PC-9 (cell line): ENCODE measurements at regions of chr18 and their contacts with region 1.

Region 1: GRCh38 chr18:79528846-79529245 is 133.1 kb downstream of the NFATC1 start:
- DNase-seq: peak; percentile 43 to 60
- H3K4me3 ChIP-seq: no peak overlapping the region
- H3K27ac ChIP-seq: no peak overlapping the region
- H3K4me1 ChIP-seq: no peaks in the 10 kb centered on the region
- H3K27me3 ChIP-seq: peaks cover 66% of the 10 kb centered on the region
- CTCF ChIP-seq: peak; percentile 86

Region 2: GRCh38 chr18:79343567-79344207 is 185.2 kb before region 1 on chr18:
- CTCF ChIA-PET with region 1: no interaction called
- POLR2A ChIA-PET with region 1: no interaction called
- intact Hi-C with region 1: no loop called
- DNase-seq: peak in 1 of 2 experiments; percentile 41
- H3K4me3 ChIP-seq: no peak overlapping the region
- H3K27ac ChIP-seq: no peak overlapping the region
- H3K4me1 ChIP-seq: no peaks in the 10 kb centered on the region
- H3K27me3 ChIP-seq: no peaks in the 10 kb centered on the region
- CTCF ChIP-seq: no peak

Region 3: DNA sequence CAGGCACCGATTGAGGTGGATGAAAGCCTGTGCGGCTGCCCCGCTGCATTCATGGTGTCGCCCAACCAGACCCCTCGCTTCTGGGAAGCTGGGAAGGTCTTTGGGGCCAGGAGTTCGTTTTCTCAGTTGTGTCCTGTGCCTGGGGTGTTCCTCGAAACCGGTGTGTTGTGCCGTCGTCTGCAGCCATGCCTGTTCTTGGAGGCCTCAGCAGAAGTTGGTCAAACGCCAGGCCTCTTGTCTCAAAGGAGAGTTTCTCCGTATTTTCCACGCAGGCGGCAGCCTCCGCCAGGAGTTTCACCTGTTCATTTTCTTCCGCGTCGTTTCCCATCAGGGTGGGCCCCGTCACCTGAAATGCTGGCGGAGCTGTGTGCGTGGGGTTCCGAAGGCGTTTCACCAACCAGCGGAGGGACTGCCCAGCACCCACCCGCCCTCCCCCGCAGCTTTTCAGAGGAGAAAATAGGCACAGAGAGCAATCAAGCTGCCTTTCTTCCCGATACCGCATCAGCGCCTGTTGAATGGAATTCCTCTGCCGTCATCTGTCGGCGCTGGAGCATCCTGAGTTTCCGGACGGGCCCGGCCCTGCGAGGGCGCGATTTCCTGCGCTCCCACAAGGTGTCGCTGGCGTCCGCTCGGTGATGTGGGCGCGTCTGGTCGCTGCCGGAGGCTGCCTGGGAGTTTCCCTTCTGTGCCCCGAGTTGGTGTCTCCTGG is 150.2 kb before region 1 on chr18:
- CTCF ChIA-PET with region 1: no interaction called
- POLR2A ChIA-PET with region 1: no interaction called
- intact Hi-C with region 1: loop called (anchors 1 kb)
- DNase-seq: peak in 1 of 2 experiments; percentile 70
- H3K4me3 ChIP-seq: no peak overlapping the region
- H3K27ac ChIP-seq: no peak overlapping the region
- H3K4me1 ChIP-seq: no peaks in the 10 kb centered on the region
- H3K27me3 ChIP-seq: peaks cover 20% of the 10 kb centered on the region
- CTCF ChIP-seq: peak; percentile 90

Region 4: DNA sequence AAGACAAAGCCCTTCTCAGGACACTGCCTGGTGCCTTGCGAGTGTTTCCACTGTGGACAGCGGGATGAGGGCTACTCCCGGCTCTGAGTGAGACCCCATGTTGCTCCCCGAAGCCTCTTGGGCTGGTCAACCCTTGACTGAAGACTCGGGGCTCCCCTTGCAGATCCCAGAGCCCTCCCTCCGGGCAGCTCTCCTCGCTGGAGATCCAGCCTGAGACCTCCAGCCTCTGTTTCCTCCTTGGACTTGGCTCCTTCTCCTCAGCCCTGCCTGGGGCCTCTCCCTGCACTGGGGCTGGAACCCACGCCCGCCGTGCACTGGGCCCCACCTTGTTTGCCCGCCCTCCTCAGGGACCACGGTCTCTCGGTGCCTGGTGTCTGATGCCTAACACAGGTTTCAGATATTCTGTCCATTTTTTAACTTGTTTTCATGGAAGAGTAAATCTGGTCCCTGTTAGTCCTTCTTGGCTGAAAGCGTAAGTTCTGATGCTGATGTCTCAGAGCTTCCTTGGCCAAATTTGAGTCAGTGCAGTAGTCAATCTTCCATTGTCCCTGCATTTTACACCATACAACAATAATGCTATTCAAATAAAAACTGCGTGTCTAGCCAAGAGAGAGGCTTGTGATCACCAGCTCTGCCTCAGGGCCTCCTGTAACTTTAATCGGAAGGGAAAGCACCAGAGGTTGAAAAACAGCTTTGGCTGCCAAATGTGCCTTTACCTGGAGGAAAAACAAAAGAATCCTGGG is 11.5 kb after region 1 on chr18:
- CTCF ChIA-PET with region 1: no interaction called
- POLR2A ChIA-PET with region 1: no interaction called
- intact Hi-C with region 1: no loop called
- DNase-seq: no peak
- H3K4me3 ChIP-seq: no peak overlapping the region
- H3K27ac ChIP-seq: no peak overlapping the region
- H3K4me1 ChIP-seq: no peaks in the 10 kb centered on the region
- H3K27me3 ChIP-seq: peaks cover 78% of the 10 kb centered on the region
- CTCF ChIP-seq: no peak